Lower leg skin (tissue), 4 donors: ENCODE measurements at regions of chr1 and their contacts with region 1.

Region 1: GRCh38 chr1:165815725-165816124 is 11.7 kb upstream of the UCK2 start:
- DNase-seq: no peak
- H3K4me3 ChIP-seq: no peak overlapping the region
- CTCF ChIP-seq: no peak
- POLR2A ChIP-seq: no peak

Region 2: DNA sequence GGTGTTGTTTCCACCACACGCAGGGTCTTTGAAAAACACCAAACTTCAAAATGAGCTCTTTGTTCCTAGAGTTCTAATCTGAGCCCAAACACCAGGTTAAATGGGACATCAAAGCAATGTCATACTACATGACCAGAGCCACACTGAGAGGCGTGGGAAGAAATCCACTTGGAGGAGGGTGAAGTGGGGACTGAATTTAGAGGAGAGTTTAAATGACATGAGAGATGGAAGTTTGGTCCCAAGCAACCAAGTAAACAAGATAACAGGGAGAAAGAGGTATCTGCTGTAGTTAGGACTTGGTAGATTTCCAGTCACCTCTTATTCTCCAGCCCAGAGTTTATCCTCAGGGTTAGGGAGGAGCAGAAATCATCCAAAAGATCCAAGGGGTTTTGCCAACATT is 642.0 kb after region 1 on chr1:
- intact Hi-C with region 1: no loop called
- DNase-seq: no peak
- H3K4me3 ChIP-seq: no peak overlapping the region
- CTCF ChIP-seq: no peak
- POLR2A ChIP-seq: no peak

Region 3: DNA sequence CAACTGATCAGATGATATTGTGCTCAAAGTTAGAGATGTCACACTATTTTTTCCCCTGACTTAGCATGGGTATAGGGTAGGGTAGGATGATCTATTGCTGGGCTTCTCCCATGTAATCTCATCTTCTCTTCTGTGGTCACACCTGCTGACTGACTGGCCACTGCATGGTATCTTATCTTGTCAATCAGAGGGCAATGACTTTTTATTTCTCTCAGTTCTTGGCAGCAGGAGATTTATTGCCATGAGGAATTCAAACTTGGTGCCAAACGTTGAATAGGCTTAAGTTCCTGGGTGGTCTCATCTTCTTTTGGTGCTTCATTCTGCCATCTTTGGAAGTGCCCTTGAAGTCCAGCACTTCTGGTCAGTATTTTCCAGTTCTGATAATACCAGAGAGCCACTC is 797.2 kb after region 1 on chr1:
- intact Hi-C with region 1: loop called (anchors 5 kb)
- DNase-seq: no peak
- H3K4me3 ChIP-seq: no peak overlapping the region
- CTCF ChIP-seq: no peak
- POLR2A ChIP-seq: no peak

Region 4: GRCh38 chr1:167175901-167176300 is 1360.2 kb after region 1 on chr1:
- intact Hi-C with region 1: no loop called
- DNase-seq: no peak
- H3K4me3 ChIP-seq: no peak overlapping the region
- CTCF ChIP-seq: no peak
- POLR2A ChIP-seq: no peak